Right cardiac atrium (tissue), 5 donors: ENCODE measurements at regions of chr7 and their contacts with region 1.

Region 1: DNA sequence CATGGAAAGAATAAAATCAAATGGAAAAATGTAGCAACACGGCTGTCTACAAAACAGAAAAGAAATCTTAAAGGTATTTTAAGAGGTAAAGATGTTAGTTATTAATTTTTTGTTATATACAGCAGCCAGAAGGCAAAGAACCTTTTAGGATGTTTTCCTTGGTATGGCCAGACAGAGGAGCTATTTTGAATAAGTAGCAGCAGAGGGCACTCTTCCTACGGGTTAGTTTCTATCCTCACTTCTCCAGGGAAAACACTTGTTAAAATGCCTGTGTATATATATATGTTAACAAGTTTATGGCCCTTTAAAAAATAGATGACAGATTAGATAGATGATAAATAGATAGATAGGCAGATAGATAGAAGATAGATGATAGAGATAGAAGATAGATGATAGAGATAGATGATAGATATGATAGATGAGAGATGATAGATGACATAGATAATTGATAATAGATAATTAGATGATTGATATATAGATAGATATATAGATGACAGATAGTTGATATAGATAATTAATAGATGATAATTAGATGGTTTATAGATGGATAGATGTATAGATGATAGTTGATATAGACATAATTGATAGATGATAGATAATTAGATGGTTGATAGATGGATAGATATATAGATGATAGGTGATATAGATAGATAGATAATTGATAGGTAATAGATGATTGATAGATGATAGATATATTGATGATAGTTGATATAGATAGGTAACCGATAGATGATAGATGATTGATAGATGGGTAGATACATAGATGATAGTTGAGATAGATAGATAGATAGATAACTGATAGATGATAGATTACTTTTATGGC is 57.8 kb upstream of the WIPF3 start:
- DNase-seq: no peak
- ATAC-seq: peak; percentile 59 to 87
- H3K4me3 ChIP-seq: no peak overlapping the region
- H3K27ac ChIP-seq: no peak overlapping the region
- H3K4me1 ChIP-seq: no peaks in the 10 kb centered on the region
- H3K27me3 ChIP-seq: no peaks in the 10 kb centered on the region

Region 2: DNA sequence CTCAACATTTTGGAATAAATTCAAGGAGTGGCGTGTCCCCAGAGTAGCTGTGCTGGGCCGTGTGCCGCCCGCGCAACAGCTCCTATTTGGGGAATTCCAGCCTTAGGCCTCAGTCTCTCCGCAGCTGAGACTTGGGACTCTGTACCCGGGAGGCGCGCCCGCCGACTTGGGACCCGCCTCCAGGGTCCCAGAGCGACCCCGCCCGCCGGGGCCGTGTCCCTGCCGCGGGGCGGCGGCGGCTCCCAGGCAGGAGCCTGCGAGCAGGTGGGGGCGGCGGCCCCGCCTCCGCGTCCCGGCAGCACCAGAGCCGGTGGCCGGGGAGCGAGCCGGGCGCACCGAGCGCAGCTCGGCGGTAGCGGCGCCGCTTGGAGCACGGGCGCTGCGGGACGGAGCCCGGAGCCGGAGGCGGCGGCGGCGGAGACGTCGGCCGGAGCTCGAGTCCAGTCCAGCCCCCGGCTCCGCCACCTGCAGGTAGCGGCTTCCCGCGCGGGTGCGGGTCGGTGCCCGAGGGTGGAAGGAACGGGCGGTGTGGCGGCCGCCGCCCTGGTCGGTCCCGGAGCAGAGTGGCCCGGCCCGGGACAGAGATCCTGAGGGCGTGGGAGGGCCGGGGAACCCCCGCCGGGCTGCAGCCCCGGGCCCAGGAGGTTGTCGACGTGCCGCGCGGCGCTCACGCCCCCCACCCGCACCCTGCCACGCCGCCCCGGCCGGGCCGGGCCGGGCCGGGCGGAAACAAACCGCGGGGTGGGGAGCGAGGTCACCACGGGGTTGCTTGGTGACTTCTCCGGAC is 57.9 kb after region 1 on chr7 and contains the start of gene WIPF3:
- intact Hi-C with region 1: loop called in 1 of 4 experiments (anchors 10 kb)
- DNase-seq: peak; percentile 30 to 73 (median 72)
- ATAC-seq: peak; percentile 61 to 69
- H3K4me3 ChIP-seq: peak within 1 kb of the TSS; percentile 76
- H3K27ac ChIP-seq: peak within 1 kb of the TSS; percentile 22
- H3K4me1 ChIP-seq: no peaks in the 10 kb centered on the region
- H3K27me3 ChIP-seq: no peaks in the 10 kb centered on the region
- total RNA-seq, gene WIPF3: 1.8 to 4.4 (median 2.6) TPM

Region 3: GRCh38 chr7:29921404-29922010 is 173.0 kb after region 1 on chr7:
- intact Hi-C with region 1: loop called in 2 of 4 experiments (anchors 5 to 10 kb)
- DNase-seq: no peak
- ATAC-seq: peak; percentile 76 to 90
- H3K4me3 ChIP-seq: no peak overlapping the region
- H3K27ac ChIP-seq: no peak overlapping the region
- H3K4me1 ChIP-seq: no peaks in the 10 kb centered on the region
- H3K27me3 ChIP-seq: no peaks in the 10 kb centered on the region